Thyroid gland (tissue), 4 donors: ENCODE measurements at regions of chr16 and their contacts with region 1.

Region 1: DNA sequence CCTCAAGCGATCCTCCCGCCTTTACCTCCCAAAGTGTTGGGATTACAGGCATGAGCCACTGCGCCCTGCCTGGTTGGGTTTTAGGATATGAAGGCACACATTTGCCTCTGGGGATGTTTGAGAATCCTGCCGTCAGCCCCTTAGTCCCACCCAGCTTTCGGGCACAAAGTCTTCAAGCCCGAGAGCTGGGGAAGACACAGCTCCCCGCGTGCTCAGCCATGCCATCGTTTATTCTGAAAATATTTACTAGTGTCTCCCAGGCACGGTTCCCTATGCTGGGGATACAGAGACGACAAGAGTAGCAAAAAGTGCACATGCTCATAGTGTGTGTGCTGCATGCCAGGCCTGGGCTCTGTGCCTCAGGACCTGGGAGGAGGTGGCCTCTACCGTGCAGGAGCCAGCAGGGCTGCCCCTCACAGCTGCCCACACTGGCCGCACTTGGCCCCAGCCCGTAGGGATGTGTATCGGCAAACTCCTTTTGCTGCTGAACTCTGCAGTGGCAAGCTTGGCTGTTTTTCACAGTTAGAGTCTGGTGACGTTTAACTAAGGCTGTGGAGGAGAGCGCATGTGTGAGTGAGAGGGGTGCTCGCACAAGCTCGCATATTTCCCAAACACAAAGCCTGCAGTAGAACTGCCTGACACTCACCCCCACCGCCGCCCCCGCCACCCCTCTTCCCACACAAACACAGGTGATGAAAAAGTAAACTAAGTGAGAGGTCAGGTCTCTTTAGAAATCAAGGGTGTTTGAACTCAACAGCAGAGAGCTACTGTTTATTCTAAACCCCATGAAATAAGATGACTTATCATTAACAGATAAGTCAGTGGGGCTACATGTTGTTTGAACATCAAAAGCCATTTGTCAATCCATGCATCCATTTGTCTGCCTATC is 266.4 kb downstream of the MRTFB start:
- DNase-seq: peak; percentile 59 to 64
- H3K4me3 ChIP-seq: no peak overlapping the region
- H3K27ac ChIP-seq: peak overlapping the region in 2 of 3 donors; percentile 25 to 49
- H3K4me1 ChIP-seq: peaks cover 6 to 7% of the 10 kb centered on the region in 2 donors
- H3K27me3 ChIP-seq: no peaks in the 10 kb centered on the region
- CTCF ChIP-seq: no peak
- POLR2A ChIP-seq: no peak

Region 2: GRCh38 chr16:13909872-13910303 is 427.7 kb before region 1 on chr16:
- intact Hi-C with region 1: no loop called
- DNase-seq: peak; percentile 72 to 84
- H3K4me3 ChIP-seq: no peak overlapping the region
- H3K27ac ChIP-seq: peak overlapping the region; percentile 29 to 74 (median 58)
- H3K4me1 ChIP-seq: peaks cover 0 to 10% of the 10 kb centered on the region in 2 donors
- H3K27me3 ChIP-seq: no peaks in the 10 kb centered on the region
- CTCF ChIP-seq: peak in 2 of 6 experiments; percentile 27 to 37
- POLR2A ChIP-seq: peak in 1 of 2 donors; percentile 24

Region 3: DNA sequence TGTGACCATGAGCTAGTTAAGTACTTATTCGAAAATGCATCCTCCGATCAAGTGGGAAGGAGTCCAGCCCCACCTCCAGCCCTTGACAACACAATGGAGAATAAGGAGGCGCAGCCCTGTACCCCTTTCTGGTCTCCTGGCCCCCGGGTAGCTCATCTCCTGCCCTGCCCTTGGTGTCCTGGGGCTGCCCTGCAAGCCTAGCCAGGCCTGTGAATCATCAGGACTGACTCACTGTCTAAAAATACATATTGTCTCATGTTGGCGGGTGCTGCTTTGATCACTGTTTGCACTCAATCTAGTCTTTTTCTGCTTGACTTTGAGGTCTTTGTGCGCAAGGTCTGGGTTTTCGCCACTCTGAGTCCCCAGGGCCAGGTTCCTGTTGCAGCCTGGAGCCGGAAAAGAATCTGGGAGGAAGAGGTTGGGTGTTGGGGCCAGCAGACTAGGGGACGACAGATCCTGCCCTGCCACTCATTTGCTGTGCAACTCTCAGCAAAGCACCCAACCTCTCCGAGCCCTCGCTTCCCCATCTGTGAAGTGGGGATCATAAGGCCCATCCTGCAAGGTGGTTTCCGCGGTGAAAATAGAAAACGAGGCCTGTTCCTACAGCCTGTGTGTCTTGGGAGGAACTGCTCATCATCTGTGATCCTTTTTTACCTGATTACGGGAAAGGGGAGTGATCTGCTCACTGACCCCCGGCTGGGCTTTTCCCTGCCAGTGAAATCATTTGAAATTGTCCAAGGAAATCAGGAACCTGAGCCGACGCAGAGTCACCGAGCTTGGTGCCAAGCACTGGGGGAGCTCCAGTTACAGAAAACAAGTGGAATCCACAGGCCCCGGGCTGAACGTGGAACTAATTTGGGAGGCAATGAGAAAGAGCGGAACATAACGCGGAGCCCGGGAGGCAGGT is 62.1 kb after region 1 on chr16:
- intact Hi-C with region 1: loop called (anchors 10 kb)
- DNase-seq: no peak
- H3K4me3 ChIP-seq: no peak overlapping the region
- H3K27ac ChIP-seq: no peak overlapping the region
- H3K4me1 ChIP-seq: peaks cover 0 to 8% of the 10 kb centered on the region in 2 donors
- H3K27me3 ChIP-seq: no peaks in the 10 kb centered on the region
- CTCF ChIP-seq: no peak
- POLR2A ChIP-seq: no peak